ENCODE measurements at regions of chr5 and their contacts with region 1.

Region 1: GRCh38 chr5:172697123-172698121 is 56.4 kb downstream of the NEURL1B start:
- DNase-seq: peak; percentile 90
- CTCF ChIP-seq: peak; percentile 87

Region 2: GRCh38 chr5:172450861-172451695 is 246.3 kb before region 1 on chr5:
- CTCF ChIA-PET with region 1: interaction called, 25 read pairs
- POLR2A ChIA-PET with region 1: no interaction called
- DNase-seq: peak; percentile 46
- CTCF ChIP-seq: peak; percentile 48

Region 3: GRCh38 chr5:172458976-172459782 is 238.2 kb before region 1 on chr5:
- CTCF ChIA-PET with region 1: interaction called, 19 read pairs
- POLR2A ChIA-PET with region 1: no interaction called
- DNase-seq: no peak
- CTCF ChIP-seq: no peak

Region 4: DNA sequence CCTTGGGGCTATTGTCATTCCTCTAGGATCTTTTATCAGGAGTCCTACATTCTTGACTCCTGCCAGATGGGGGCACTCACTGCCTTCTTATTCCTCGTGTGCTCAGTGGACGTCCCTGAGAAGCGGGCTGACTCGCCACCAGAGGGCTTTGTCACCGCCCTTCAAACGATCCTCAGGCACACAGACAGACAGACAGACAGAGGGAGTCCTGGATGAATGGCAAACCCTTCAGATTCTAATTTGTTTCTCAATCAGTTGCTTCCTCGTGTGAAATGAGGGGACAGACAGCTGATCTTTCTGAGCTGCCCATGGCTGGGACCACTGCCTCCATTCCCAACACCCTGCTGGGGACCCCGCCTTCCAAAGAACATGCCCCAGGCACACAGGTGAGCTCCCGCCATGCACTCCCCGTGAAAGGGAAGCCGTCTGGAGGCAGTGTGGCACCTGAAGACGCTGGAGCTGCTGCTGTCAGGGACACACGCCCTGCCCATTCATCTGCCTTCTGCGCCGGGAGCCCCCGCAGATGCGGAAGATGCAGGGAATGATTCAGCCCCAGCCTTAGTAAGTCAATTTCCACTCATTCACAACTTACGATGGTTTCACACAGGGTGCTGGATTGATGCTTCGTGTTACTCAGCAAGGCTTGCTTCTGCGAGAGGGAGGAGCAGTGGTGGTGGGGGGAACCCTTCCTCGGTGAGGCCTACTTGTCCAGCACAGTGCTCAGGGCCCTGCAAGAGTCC is 218.2 kb before region 1 on chr5:
- CTCF ChIA-PET with region 1: interaction called, 49 read pairs
- POLR2A ChIA-PET with region 1: no interaction called
- DNase-seq: peak; percentile 85
- CTCF ChIP-seq: peak; percentile 76

Region 5: GRCh38 chr5:172707285-172708182 is 10.1 kb after region 1 on chr5:
- CTCF ChIA-PET with region 1: interaction called, 16 read pairs
- POLR2A ChIA-PET with region 1: no interaction called
- DNase-seq: no peak
- CTCF ChIP-seq: peak; percentile 53

Measured in GM10248 (cell line).